PC-3 (cell line): ENCODE measurements at regions of chr19 and their contacts with region 1.

Region 1: GRCh38 chr19:33311326-33311682 is 9.0 kb upstream of the CEBPA start:
- DNase-seq: peak; percentile 16
- ATAC-seq: peak; percentile 23; the same call in 1 of the 2 replicates
- H3K4me3 ChIP-seq: no peak overlapping the region
- H3K27ac ChIP-seq: peak overlapping the region; percentile 29; the same call in 1 of the 2 replicates
- H3K4me1 ChIP-seq: peaks cover 12% of the 10 kb centered on the region
- H3K27me3 ChIP-seq: no peaks in the 10 kb centered on the region
- CTCF ChIP-seq: peak; percentile 58

Region 2: GRCh38 chr19:33214596-33214995 is 96.7 kb before region 1 on chr19:
- CTCF ChIA-PET with region 1: no interaction called
- POLR2A ChIA-PET with region 1: no interaction called
- intact Hi-C with region 1: no loop called
- DNase-seq: peak; percentile 4
- ATAC-seq: no peak
- H3K4me3 ChIP-seq: no peak overlapping the region
- H3K27ac ChIP-seq: no peak overlapping the region
- H3K4me1 ChIP-seq: no peaks in the 10 kb centered on the region
- H3K27me3 ChIP-seq: no peaks in the 10 kb centered on the region
- CTCF ChIP-seq: peak; percentile 34; the same call in 1 of the 2 replicates

Region 3: DNA sequence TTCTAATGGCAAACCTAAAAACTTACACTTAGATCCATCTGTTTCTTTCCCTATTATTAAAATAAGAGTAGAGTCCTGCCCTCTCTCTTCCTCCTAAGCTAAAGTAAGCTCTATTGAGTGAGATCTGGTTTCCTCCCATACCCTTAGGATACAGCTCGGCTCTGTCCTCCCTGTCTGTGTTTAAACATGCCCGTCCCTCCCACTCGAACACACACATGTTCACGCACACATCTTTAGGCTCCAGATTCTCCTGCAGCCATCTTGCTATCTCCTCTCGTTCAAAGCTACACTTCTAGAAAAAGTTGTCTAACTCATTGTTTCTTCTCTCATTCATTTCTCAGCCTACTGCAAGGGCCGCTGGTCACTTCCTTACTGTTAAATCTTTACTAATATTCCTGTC is 47.1 kb after region 1 on chr19:
- CTCF ChIA-PET with region 1: no interaction called
- POLR2A ChIA-PET with region 1: interaction called, 11 read pairs
- intact Hi-C with region 1: no loop called
- DNase-seq: no peak
- ATAC-seq: no peak
- H3K4me3 ChIP-seq: no peak overlapping the region
- H3K27ac ChIP-seq: no peak overlapping the region
- H3K4me1 ChIP-seq: no peaks in the 10 kb centered on the region
- H3K27me3 ChIP-seq: no peaks in the 10 kb centered on the region
- CTCF ChIP-seq: no peak